Endothelial cell of umbilical vein (primary cell): ENCODE measurements at regions of chr15 and their contacts with region 1.

Region 1: DNA sequence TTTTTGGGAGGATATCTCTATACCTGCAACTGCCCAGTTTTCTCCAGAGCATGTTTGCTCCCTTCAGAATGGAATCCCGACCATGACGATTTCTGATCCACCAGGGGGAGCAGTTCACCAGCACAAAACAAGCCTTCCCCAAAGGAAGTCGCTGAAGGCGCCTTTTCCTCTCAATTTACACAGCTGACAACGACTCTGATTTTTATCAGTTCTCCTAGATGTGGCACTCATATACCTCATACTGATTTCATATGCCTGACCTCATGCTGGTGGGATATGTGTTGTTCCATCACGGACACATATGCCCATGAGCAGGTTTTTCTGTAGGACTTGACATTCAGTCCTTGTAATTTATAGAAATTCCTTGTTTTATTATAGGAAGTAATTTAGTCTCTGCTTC is 1028.2 kb downstream of the MCTP2 start:
- DNase-seq: peak; percentile 92
- H3K4me3 ChIP-seq: no peak overlapping the region
- H3K27ac ChIP-seq: peak overlapping the region; percentile 89
- H3K4me1 ChIP-seq: peaks cover 46% of the 10 kb centered on the region
- H3K27me3 ChIP-seq: no peaks in the 10 kb centered on the region
- CTCF ChIP-seq: peak; percentile 71
- POLR2A ChIP-seq: no peak

Region 2: DNA sequence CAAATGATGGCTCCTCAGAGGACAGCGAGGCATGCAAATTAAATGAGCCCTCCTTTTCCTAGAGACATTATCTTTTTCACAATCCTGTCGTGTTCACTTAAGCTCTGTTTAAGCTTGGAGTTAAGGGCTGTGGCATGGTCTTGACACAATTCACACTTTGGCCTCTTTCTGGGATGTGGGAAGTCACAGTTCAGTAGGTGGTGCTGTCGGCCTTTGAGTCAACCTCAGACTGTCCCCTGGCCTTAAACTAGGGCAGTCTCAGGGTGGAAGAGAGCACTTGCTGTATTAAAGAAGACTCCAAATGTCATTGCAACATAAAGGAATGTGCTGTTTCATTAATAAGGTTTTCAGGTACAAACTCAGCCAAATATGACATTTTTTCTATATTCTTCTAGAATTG is 677.1 kb before region 1 on chr15:
- CTCF ChIA-PET with region 1: interaction called, 13 read pairs
- POLR2A ChIA-PET with region 1: no interaction called
- dilution Hi-C with region 1: no loop called
- intact Hi-C with region 1: loop called (anchors 1 kb)
- DNase-seq: peak; percentile 85
- H3K4me3 ChIP-seq: no peak overlapping the region
- H3K27ac ChIP-seq: no peak overlapping the region
- H3K4me1 ChIP-seq: peaks cover 25% of the 10 kb centered on the region
- H3K27me3 ChIP-seq: no peaks in the 10 kb centered on the region
- CTCF ChIP-seq: peak; percentile 75 to 80
- POLR2A ChIP-seq: no peak

Region 3: DNA sequence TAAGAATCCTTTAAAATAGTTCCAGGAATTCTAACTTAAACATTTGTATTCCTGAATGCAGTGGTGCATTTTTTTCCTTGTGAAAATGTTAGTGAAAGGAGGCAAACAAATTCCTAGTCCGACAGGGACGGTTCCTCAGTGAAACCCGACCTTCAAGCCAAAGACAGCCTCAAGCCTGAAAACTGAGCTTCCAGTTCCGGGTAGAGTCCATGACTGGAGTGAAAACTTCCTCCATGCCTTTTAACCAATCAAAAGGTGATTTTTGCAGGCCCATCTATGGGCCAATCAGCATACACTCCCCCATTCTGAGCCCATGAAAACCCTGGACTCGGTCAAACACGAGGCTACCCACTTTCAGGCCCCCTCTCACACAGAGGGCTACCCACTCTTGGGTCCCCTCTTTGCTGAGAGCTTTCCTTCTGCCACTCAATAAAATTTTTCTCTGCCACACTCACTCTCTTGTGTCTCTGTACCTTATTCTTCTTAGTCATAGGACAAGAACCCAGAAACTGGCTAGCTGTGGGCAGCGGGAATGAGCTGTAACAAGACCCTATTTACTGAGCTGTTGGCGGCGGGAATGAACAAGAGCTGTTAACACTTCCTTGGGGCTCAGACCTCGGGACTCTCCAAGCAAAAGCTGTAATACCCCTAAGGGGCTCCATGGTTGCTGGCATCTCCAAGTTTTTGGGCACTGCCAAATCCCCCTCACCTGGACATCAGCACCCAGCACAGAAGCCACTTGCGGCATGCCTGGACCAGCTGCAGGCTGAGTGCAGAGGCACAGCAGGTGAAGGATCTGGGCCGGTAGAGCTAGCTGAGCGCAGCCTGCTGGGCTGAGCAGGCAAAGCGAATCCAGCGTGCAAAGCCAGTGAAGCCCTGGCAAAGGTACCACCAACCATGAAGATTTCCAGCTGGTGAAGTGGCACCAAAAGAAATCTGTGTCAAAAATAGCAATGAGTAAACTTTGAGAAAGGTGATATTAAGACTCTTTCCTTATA is 429.3 kb before region 1 on chr15:
- CTCF ChIA-PET with region 1: no interaction called
- POLR2A ChIA-PET with region 1: no interaction called
- dilution Hi-C with region 1: no loop called
- intact Hi-C with region 1: no loop called
- DNase-seq: no peak
- H3K4me3 ChIP-seq: no peak overlapping the region
- H3K27ac ChIP-seq: no peak overlapping the region
- H3K4me1 ChIP-seq: no peaks in the 10 kb centered on the region
- H3K27me3 ChIP-seq: no peaks in the 10 kb centered on the region
- CTCF ChIP-seq: no peak
- POLR2A ChIP-seq: no peak

Region 4: GRCh38 chr15:95284933-95285421 is 25.5 kb after region 1 on chr15:
- CTCF ChIA-PET with region 1: interaction called, 24 read pairs
- POLR2A ChIA-PET with region 1: no interaction called
- dilution Hi-C with region 1: no loop called
- intact Hi-C with region 1: loop called (anchors 1 kb)
- DNase-seq: peak; percentile 88
- H3K4me3 ChIP-seq: no peak overlapping the region
- H3K27ac ChIP-seq: peak overlapping the region; percentile 15
- H3K4me1 ChIP-seq: peaks cover 63% of the 10 kb centered on the region
- H3K27me3 ChIP-seq: no peaks in the 10 kb centered on the region
- CTCF ChIP-seq: peak; percentile 21 to 28
- POLR2A ChIP-seq: no peak

Region 5: DNA sequence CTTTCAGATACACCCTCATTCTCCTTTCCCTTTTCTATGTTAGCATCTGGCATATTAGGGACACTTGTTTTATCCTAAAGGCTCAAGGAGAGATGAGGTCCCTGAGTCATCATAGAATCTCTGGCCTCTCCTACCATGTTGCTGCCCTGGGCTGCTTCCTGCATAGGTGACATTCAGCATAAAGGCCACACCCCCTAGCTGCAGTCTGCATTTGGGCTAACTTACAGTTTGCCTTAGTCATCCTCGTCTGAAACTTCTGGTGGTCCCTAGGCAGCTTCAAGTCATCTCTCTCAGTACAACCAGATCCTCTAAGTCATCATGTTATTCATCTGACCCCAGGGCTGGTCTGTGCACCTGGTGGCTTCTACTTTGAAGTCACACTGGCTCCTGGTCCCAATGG is 88.3 kb after region 1 on chr15:
- CTCF ChIA-PET with region 1: no interaction called
- POLR2A ChIA-PET with region 1: no interaction called
- dilution Hi-C with region 1: no loop called
- intact Hi-C with region 1: no loop called
- DNase-seq: no peak
- H3K4me3 ChIP-seq: no peak overlapping the region
- H3K27ac ChIP-seq: no peak overlapping the region
- H3K4me1 ChIP-seq: no peaks in the 10 kb centered on the region
- H3K27me3 ChIP-seq: no peaks in the 10 kb centered on the region
- CTCF ChIP-seq: no peak
- POLR2A ChIP-seq: no peak

Region 6: DNA sequence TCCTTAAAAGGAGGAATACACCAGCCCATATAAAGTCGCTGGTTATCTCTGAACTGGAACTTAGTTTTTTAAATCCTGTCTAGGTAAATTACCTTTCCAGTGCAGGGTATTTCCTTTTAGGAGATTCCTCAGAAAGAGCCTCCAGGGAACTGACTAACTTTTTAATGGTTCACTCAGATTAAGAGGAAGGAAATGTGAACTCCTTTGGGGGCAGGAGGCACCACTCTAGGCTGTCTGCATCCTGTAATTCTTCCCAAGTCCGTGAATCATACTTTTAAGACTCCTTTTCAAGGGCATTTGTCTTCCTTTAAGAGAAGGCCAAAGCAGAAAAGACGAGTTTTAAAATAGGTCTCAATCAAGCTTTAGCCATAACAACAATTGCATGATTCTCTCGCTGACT is 199.8 kb after region 1 on chr15:
- CTCF ChIA-PET with region 1: interaction called, 3 read pairs
- POLR2A ChIA-PET with region 1: no interaction called
- dilution Hi-C with region 1: no loop called
- intact Hi-C with region 1: loop called (anchors 2 kb)
- DNase-seq: peak; percentile 90
- H3K4me3 ChIP-seq: peak overlapping the region in 1 of 3 experiments; percentile 51
- H3K27ac ChIP-seq: peak overlapping the region; percentile 85
- H3K4me1 ChIP-seq: peaks cover 41% of the 10 kb centered on the region
- H3K27me3 ChIP-seq: no peaks in the 10 kb centered on the region
- CTCF ChIP-seq: no peak
- POLR2A ChIP-seq: peak; percentile 65

Region 7: DNA sequence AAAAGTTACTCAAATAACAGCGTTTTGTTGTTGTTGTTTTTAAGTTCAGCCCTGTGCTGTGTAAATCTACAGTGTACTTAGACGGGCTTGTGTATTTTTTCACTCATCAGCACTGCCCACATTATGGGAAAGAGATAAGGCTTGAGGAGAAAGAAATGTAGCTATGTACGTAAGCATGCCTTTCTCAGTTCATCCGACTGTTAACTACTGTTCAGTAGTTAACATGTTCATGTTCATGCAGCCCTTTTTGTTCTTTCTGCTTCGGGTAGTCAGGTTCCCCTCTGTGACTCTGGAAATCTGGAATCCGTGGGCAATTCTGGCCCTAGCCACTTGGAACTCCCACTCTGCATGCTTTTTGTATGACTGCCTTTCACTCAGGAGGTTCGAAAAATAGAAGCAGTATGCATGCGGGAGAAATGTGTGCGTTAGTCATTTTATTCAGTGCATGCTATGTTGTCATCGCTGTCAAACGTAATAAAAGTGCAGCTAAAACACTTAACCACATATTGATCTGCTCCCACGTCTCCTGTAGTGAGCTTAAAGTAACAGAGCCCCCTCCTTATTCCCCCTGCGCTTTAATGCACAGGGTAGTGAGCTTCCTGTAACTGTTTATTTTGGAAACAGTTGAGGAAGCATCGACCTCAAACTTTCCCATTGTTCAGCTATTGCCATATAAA is 787.9 kb after region 1 on chr15:
- CTCF ChIA-PET with region 1: interaction called, 4 read pairs
- POLR2A ChIA-PET with region 1: interaction called, 6 read pairs
- dilution Hi-C with region 1: no loop called
- intact Hi-C with region 1: loop called (anchors 2 kb)
- DNase-seq: peak; percentile 83
- H3K4me3 ChIP-seq: peak overlapping the region in 1 of 3 experiments; percentile 13
- H3K27ac ChIP-seq: no peak overlapping the region
- H3K4me1 ChIP-seq: peaks cover 14% of the 10 kb centered on the region
- H3K27me3 ChIP-seq: peaks cover 0 to 1% of the 10 kb centered on the region in 2 experiments
- CTCF ChIP-seq: no peak
- POLR2A ChIP-seq: no peak

Region 8: DNA sequence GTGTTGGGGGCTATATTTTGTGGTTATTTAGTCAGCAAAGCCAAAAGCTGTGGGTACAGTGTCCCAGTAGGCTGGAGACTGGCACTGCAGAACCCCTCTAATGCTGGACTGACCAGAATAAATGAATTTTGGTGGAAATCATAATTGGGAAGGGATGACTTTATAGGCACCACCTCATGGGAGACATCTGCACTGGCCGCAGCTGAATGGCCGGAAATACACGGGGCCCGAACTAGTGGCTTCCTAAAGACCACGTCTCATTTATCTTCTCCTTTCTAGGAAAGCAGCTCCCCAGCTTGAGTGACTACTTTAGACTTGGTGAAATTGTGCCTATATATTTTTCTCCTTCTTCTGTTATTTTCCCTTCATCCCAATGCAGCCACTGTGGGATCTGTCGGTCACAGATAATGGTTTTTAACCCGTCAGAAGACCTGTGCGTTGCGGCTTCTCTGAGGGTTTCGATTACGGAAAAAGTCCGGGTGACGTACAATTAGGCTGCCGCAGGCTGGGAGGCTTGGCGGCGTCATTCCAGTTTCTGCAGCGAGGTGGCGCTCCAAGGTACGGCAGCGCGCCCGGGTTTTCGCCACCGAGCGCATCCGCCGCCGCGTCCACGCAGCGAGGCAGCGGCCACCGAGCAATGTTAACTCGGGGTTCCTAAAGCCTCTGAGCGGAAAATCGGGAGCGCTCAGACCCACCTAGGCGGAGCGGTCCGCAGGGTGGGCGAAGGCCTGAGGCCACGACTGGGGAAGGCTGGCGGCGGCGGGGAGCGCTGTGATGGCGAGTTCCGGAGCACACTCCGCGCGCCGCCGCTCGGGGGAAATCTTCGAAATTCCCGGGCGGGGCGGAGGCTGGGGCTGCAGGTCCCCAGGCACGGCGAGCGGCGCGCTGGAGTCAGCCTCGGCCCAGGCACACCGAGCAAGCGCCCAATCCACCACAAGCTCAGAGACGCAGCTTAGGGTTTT is 1097.3 kb after region 1 on chr15:
- CTCF ChIA-PET with region 1: interaction called, 10 read pairs
- POLR2A ChIA-PET with region 1: no interaction called
- dilution Hi-C with region 1: no loop called
- intact Hi-C with region 1: loop called (anchors 2 kb)
- DNase-seq: peak; percentile 88
- H3K4me3 ChIP-seq: peak overlapping the region; percentile 46 to 81 (median 65)
- H3K27ac ChIP-seq: peak overlapping the region; percentile 76
- H3K4me1 ChIP-seq: peaks cover 71% of the 10 kb centered on the region
- H3K27me3 ChIP-seq: no peaks in the 10 kb centered on the region
- CTCF ChIP-seq: peak; percentile 94 to 98
- POLR2A ChIP-seq: no peak